K562 (cell line): ENCODE measurements at regions of chr9 and their contacts with region 1.

Region 1: DNA sequence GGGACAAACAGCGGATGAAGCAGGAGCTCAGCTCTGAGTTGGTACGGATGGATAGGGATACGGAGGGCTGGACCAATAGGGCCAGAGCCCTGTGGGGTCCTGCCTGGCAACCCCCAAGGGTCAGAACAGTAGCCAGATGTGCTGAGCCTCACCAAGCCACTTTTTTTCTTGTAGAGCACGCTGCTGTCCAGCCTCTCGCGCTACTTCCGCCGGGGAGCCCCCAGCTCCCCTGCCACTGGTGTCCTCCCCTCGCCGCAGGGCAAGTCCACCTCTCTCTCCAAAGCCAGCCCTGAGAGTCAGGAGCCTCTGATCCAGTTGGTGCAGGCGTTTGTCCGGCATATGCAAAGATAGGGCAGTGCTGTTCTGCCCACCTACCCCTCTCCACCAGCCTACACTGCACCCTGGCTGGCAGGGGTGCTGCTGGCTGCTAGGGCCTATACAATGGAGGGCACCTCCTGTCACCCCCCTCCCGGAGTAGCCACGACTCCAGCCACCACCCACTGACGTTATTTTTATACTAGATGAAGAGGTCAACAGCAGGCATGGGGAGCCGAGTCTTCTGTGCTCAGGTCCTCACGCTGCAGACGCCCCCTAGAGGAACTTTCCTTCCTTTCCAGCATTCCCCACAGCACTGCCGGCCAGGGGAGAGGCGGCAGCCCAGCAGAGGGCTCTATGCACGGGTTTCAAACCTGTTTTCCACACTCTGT is 21.6 kb downstream of the SH3GLB2 start:
- DNase-seq: peak; percentile 80 to 89 (median 84)
- ATAC-seq: peak; percentile 96
- H3K4me3 ChIP-seq: no peak overlapping the region
- H3K27ac ChIP-seq: peak overlapping the region; percentile 55; the same call in 1 of the 3 replicates
- H3K4me1 ChIP-seq: peaks cover 0 to 36% of the 10 kb centered on the region in 2 experiments; a peak in 3 of 5 replicates
- H3K27me3 ChIP-seq: no peaks in the 10 kb centered on the region
- CTCF ChIP-seq: peak; percentile 97 to 99 (median 99)
- EP300 ChIP-seq: no peak
- POLR2A ChIP-seq: peak; percentile 76
- RAD21 ChIP-seq: peak; percentile 56 to 71

Region 2: DNA sequence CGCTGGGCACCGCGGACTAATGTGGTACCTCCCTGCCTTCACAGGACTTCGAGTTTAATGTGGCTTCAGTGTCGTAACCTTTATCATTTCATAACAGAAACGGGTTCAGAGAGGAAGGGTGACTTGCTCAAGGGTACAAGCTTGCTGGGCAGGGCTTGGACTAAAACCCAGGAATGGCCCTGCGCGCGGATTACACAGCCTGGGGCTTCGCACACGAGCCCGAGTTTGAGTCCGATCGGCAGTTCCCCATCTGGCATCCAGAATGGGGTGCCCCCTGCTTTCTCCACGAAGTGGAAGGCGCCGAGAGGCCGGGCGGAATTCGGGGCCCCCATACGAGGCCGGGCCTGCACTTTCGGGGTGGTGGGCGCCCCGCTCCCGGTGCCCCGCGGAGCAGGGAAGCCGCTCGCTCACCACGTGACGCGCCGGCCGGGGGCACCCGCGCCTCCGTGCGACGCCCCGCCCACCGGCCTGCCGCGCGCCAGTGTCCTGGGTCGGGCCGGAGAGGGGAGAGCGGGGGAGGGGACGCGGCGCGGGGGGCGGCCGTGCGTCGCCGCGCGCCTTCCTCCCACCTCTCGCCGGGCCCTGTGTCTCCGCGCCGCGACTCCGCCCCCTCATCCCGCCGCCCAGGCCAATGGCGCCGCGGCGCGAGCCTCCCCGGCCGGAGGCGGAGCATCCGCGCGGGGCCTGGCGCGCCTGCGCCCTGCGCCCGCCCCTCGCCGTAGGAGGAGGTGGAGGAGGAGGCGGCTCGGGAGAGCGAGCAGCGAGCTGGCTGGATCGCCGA is 317.8 kb before region 1 on chr9 and contains the start of gene SET:
- CTCF ChIA-PET with region 1: no interaction called
- POLR2A ChIA-PET with region 1: no interaction called
- in situ Hi-C with region 1: no loop called
- intact Hi-C with region 1: no loop called
- DNase-seq: peak; percentile 99 to 100 (median 99)
- ATAC-seq: peak; percentile 95
- H3K4me3 ChIP-seq: peak within 1 kb of the TSS; percentile 71
- H3K27ac ChIP-seq: peak within 1 kb of the TSS; percentile 89
- H3K4me1 ChIP-seq: peaks cover 27 to 36% of the 10 kb centered on the region in 2 experiments
- H3K27me3 ChIP-seq: no peaks in the 10 kb centered on the region
- CTCF ChIP-seq: no peak; a peak in 1 of 6 replicates
- EP300 ChIP-seq: 0 out of 2 replicates have a peak, but pooled peaks have one; percentile 42
- POLR2A ChIP-seq: peak; percentile 79
- RAD21 ChIP-seq: peak; percentile 16 to 24; a peak in 2 of 4 replicates
- polyA plus RNA-seq, gene SET: 404 to 534 TPM

Region 3: DNA sequence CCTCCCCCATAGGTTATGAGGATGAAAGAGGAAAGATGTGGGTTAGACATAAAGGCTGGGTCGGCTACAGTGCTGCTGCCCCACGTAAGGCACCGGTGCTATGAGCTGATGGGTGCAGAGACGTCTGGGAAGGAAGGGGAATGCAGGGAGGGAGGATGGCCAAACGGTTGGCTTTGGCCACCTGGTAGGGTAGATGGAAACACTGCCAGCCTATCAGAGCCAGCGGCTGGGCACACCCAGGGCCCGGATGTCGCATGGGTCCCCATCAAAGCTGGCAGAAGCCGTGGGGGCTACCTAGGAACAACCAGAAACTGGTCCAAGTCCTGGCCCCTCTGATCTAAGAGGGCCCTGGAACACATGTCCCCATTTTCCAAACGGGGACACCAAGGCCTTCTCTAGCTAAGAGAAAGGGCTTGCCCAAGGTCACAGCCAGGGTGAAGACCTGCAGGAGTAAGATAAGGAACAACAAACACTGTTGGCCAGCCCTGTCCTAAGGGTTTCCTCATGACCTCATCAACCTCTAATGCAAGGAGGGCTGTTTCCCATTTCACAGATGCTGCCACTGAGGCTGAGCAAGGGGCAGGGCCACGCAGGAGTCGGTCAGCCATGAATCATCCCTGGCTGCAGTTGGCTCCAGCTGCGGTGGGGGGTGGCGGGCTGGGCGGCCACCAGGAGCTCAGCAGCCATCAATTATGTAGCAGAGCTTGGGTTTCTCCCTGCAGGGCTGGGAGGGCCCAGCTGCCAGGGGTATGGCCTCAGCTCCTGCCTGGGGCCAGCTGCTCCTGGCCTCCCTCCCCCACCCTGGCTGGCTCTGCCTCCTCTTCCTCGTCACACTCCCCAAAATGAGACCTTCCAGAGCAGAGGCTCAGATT is 16.8 kb after region 1 on chr9:
- CTCF ChIA-PET with region 1: no interaction called
- POLR2A ChIA-PET with region 1: interaction called, 15 read pairs
- in situ Hi-C with region 1: no loop called
- intact Hi-C with region 1: no loop called
- DNase-seq: peak; percentile 75 to 93 (median 80)
- ATAC-seq: peak; percentile 54
- H3K4me3 ChIP-seq: no peak overlapping the region
- H3K27ac ChIP-seq: peak overlapping the region; percentile 76
- H3K4me1 ChIP-seq: peaks cover 38 to 63% of the 10 kb centered on the region in 2 experiments
- H3K27me3 ChIP-seq: no peaks in the 10 kb centered on the region
- CTCF ChIP-seq: no peak
- EP300 ChIP-seq: peak; percentile 79
- POLR2A ChIP-seq: no peak
- RAD21 ChIP-seq: no peak

Region 4: GRCh38 chr9:129131300-129132145 is 125.0 kb after region 1 on chr9:
- CTCF ChIA-PET with region 1: no interaction called
- POLR2A ChIA-PET with region 1: no interaction called
- in situ Hi-C with region 1: no loop called
- intact Hi-C with region 1: no loop called
- DNase-seq: peak; percentile 83 to 89 (median 84)
- ATAC-seq: peak; percentile 99
- H3K4me3 ChIP-seq: no peak overlapping the region
- H3K27ac ChIP-seq: no peak overlapping the region
- H3K4me1 ChIP-seq: peaks cover 0 to 9% of the 10 kb centered on the region in 2 experiments; a peak in 2 of 5 replicates
- H3K27me3 ChIP-seq: no peaks in the 10 kb centered on the region
- CTCF ChIP-seq: peak; percentile 93 to 98 (median 95)
- EP300 ChIP-seq: 0 out of 2 replicates have a peak, but pooled peaks have one; percentile 21
- POLR2A ChIP-seq: no peak
- RAD21 ChIP-seq: peak; percentile 77 to 84

Region 5: GRCh38 chr9:129669141-129669718 is 662.7 kb after region 1 on chr9:
- CTCF ChIA-PET with region 1: no interaction called
- POLR2A ChIA-PET with region 1: no interaction called
- in situ Hi-C with region 1: no loop called
- intact Hi-C with region 1: no loop called
- DNase-seq: peak in 1 of 4 experiments; percentile 28
- ATAC-seq: no peak
- H3K4me3 ChIP-seq: no peak overlapping the region
- H3K27ac ChIP-seq: no peak overlapping the region
- H3K4me1 ChIP-seq: peaks cover 0 to 44% of the 10 kb centered on the region in 2 experiments; a peak in 2 of 5 replicates
- H3K27me3 ChIP-seq: peaks cover 18 to 55% of the 10 kb centered on the region in 2 experiments
- CTCF ChIP-seq: no peak
- EP300 ChIP-seq: no peak
- POLR2A ChIP-seq: no peak
- RAD21 ChIP-seq: no peak